Psoas muscle (tissue), 8 donors: ENCODE measurements at regions of chr2 and their contacts with region 1.

Region 1: DNA sequence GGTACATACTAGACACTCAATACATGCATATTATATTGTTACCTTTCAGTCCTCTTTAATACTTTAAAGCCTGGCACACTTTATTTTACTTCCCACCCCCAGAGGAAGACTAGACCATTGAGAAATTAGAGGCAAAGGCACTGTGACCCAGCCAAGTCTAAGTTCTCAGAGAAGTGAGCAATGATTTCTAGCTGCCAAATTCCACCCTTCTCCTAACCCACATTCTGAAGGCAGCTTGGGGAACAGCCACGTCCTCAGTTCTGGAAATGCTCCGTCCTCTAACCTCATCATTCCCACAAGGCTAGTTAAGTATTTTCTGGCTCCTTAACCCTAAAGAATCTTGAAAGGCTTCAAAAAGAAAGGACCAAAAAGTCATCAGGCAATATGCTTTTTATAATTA is 86.6 kb downstream of the COL5A2 start:
- DNase-seq: peak; percentile 38 to 56
- ATAC-seq: peak; percentile 36 to 74 (median 68)
- H3K4me3 ChIP-seq: no peak overlapping the region
- H3K27ac ChIP-seq: no peak overlapping the region
- H3K4me1 ChIP-seq: no peaks in the 10 kb centered on the region
- H3K27me3 ChIP-seq: no peaks in the 10 kb centered on the region
- CTCF ChIP-seq: no peak

Region 2: GRCh38 chr2:189047171-189047888 is 45.6 kb before region 1 on chr2:
- intact Hi-C with region 1: no loop called
- DNase-seq: no peak
- ATAC-seq: no peak
- H3K4me3 ChIP-seq: no peak overlapping the region
- H3K27ac ChIP-seq: no peak overlapping the region
- H3K4me1 ChIP-seq: no peaks in the 10 kb centered on the region
- H3K27me3 ChIP-seq: no peaks in the 10 kb centered on the region
- CTCF ChIP-seq: no peak

Region 3: DNA sequence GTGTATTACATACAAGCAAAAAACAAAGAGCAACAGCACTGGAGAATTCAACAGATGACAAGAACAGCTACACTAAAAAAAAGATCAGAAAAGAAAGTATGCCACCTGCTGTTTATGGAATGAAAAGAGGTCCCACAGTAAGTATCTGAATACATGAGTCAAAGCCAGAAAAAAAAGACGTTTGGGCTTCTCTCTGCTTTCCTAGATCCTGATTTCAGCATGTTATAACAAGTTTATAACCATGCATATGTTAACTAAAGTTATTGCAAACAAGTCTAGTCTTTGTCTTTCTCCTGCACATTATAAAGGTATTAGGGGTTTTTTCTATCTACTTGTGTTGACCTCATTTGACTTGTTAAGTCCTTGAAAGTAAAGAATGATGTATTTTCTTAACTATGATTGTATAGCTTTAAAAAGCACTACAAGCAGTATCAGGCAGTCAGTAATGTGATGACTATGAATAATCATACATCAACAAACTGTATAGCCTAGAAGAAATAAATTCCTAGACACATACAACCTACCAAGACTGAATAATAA is 195.1 kb after region 1 on chr2:
- intact Hi-C with region 1: loop called in 1 of 2 experiments (anchors 5 kb)
- DNase-seq: no peak
- ATAC-seq: peak; percentile 56 to 72 (median 66)
- H3K4me3 ChIP-seq: no peak overlapping the region
- H3K27ac ChIP-seq: no peak overlapping the region
- H3K4me1 ChIP-seq: no peaks in the 10 kb centered on the region
- H3K27me3 ChIP-seq: no peaks in the 10 kb centered on the region
- CTCF ChIP-seq: peak; percentile 54

Region 4: GRCh38 chr2:189347540-189347939 is 254.6 kb after region 1 on chr2:
- intact Hi-C with region 1: loop called in 1 of 2 experiments (anchors 5 kb)
- DNase-seq: no peak
- ATAC-seq: peak; percentile 87 to 95 (median 93)
- H3K4me3 ChIP-seq: no peak overlapping the region
- H3K27ac ChIP-seq: peak overlapping the region; percentile 60
- H3K4me1 ChIP-seq: peaks cover 8% of the 10 kb centered on the region
- H3K27me3 ChIP-seq: no peaks in the 10 kb centered on the region
- CTCF ChIP-seq: peak; percentile 39

Region 5: GRCh38 chr2:189412330-189412953 is 319.5 kb after region 1 on chr2:
- intact Hi-C with region 1: loop called (anchors 2 to 5 kb)
- DNase-seq: no peak
- ATAC-seq: peak; percentile 59 to 90 (median 70)
- H3K4me3 ChIP-seq: no peak overlapping the region
- H3K27ac ChIP-seq: no peak overlapping the region
- H3K4me1 ChIP-seq: no peaks in the 10 kb centered on the region
- H3K27me3 ChIP-seq: no peaks in the 10 kb centered on the region
- CTCF ChIP-seq: peak; percentile 78